HepG2 (cell line): ENCODE measurements at regions of chr3 and their contacts with region 1.

Region 1: GRCh38 chr3:84547971-84548970 is 410.5 kb upstream of the CADM2 start:
- DNase-seq: peak; percentile 36
- ATAC-seq: peak; percentile 97
- H3K4me3 ChIP-seq: peak overlapping the region in 2 of 3 experiments; percentile 15 to 54; a peak in 2 of 6 replicates
- H3K27ac ChIP-seq: no peak overlapping the region
- H3K4me1 ChIP-seq: peaks cover 8% of the 10 kb centered on the region
- H3K27me3 ChIP-seq: no peaks in the 10 kb centered on the region
- CTCF ChIP-seq: peak; percentile 75
- EP300 ChIP-seq: no peak
- POLR2A ChIP-seq: no peak
- RAD21 ChIP-seq: peak; percentile 32; the same call in 1 of the 2 replicates

Region 2: DNA sequence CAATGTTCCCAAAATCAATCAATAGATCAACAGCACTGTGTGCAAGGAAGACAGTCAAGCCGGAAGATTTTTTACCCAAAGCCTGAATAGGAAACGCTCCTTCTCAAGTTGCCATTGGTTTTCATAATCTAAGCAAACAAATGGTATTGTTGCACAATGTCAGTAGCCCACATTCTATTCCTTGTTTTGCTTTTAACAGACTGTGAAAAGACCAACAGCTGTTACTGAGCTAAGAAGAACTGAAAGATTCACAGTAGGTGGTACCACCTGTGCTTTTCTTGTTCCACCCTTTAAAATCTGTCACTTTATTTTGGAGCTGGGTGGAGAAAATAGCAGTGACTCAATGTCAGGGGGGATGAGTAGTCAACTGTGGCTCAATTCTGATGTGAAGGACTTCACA is 53.0 kb after region 1 on chr3:
- CTCF ChIA-PET with region 1: no interaction called
- POLR2A ChIA-PET with region 1: no interaction called
- in situ Hi-C with region 1: no loop called
- intact Hi-C with region 1: no loop called
- DNase-seq: peak; percentile 23
- ATAC-seq: peak; percentile 65
- H3K4me3 ChIP-seq: no peak overlapping the region
- H3K27ac ChIP-seq: no peak overlapping the region
- H3K4me1 ChIP-seq: no peaks in the 10 kb centered on the region
- H3K27me3 ChIP-seq: no peaks in the 10 kb centered on the region
- CTCF ChIP-seq: no peak
- EP300 ChIP-seq: no peak
- POLR2A ChIP-seq: no peak
- RAD21 ChIP-seq: no peak

Region 3: DNA sequence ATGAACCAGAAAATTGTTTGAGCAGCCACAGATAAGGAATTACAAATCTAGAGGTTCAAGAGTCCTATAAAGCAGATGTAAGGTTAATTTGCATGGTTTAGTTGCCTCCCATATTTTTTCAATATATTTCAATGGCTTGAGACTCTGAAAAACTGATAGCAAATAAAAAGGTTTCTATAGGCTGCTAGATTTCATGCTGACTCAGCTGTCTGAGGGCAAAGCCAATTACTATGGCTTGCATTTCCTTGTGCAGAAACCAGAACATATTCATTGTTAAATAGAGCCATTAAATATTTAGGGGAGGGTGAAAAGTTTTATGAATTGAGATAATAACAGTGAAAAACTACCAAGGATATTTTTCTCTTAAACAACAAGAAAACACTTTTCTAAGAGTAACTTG is 132.4 kb after region 1 on chr3:
- CTCF ChIA-PET with region 1: no interaction called
- POLR2A ChIA-PET with region 1: no interaction called
- in situ Hi-C with region 1: no loop called
- intact Hi-C with region 1: no loop called
- DNase-seq: no peak
- ATAC-seq: no peak
- H3K4me3 ChIP-seq: no peak overlapping the region
- H3K27ac ChIP-seq: no peak overlapping the region
- H3K4me1 ChIP-seq: no peaks in the 10 kb centered on the region
- H3K27me3 ChIP-seq: no peaks in the 10 kb centered on the region
- CTCF ChIP-seq: no peak
- EP300 ChIP-seq: no peak
- POLR2A ChIP-seq: no peak
- RAD21 ChIP-seq: no peak

Region 4: GRCh38 chr3:84738086-84738485 is 189.8 kb after region 1 on chr3:
- CTCF ChIA-PET with region 1: no interaction called
- POLR2A ChIA-PET with region 1: no interaction called
- in situ Hi-C with region 1: no loop called
- intact Hi-C with region 1: no loop called
- DNase-seq: no peak
- ATAC-seq: no peak
- H3K4me3 ChIP-seq: no peak overlapping the region
- H3K27ac ChIP-seq: no peak overlapping the region
- H3K4me1 ChIP-seq: no peaks in the 10 kb centered on the region
- H3K27me3 ChIP-seq: no peaks in the 10 kb centered on the region
- CTCF ChIP-seq: no peak
- EP300 ChIP-seq: no peak
- POLR2A ChIP-seq: no peak
- RAD21 ChIP-seq: no peak

Region 5: GRCh38 chr3:84755860-84756259 is 207.6 kb after region 1 on chr3:
- CTCF ChIA-PET with region 1: no interaction called
- POLR2A ChIA-PET with region 1: no interaction called
- in situ Hi-C with region 1: no loop called
- intact Hi-C with region 1: no loop called
- DNase-seq: no peak
- ATAC-seq: no peak
- H3K4me3 ChIP-seq: no peak overlapping the region
- H3K27ac ChIP-seq: no peak overlapping the region
- H3K4me1 ChIP-seq: no peaks in the 10 kb centered on the region
- H3K27me3 ChIP-seq: no peaks in the 10 kb centered on the region
- CTCF ChIP-seq: no peak
- EP300 ChIP-seq: no peak
- POLR2A ChIP-seq: no peak
- RAD21 ChIP-seq: no peak

Region 6: DNA sequence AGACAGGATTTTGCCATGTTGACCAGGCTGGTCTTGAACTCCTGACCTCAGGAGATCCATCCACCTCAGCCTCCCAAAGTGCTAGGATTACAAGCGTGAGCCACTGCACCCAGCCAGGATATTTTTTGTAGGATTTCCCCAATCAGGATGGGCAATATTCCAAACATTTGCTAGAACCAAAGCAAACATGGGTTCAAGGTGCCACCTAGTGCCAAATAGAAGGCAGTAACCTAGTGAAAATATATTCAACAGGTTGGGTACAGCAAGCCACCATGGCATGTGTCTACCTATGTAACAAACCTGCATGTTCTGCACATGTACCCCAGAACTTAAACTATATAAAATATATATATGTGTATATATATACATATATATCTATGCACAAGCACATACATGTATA is 224.6 kb after region 1 on chr3:
- CTCF ChIA-PET with region 1: no interaction called
- POLR2A ChIA-PET with region 1: no interaction called
- in situ Hi-C with region 1: no loop called
- intact Hi-C with region 1: loop called (anchors 5 kb)
- DNase-seq: peak; percentile 3
- ATAC-seq: no peak
- H3K4me3 ChIP-seq: no peak overlapping the region
- H3K27ac ChIP-seq: no peak overlapping the region
- H3K4me1 ChIP-seq: no peaks in the 10 kb centered on the region
- H3K27me3 ChIP-seq: no peaks in the 10 kb centered on the region
- CTCF ChIP-seq: 0 out of 2 replicates have a peak, but pooled peaks have one; percentile 10
- EP300 ChIP-seq: no peak
- POLR2A ChIP-seq: no peak
- RAD21 ChIP-seq: no peak

Region 7: GRCh38 chr3:84965141-84965540 is 416.9 kb after region 1 on chr3:
- CTCF ChIA-PET with region 1: interaction called, 5 read pairs
- POLR2A ChIA-PET with region 1: no interaction called
- in situ Hi-C with region 1: no loop called
- intact Hi-C with region 1: loop called (anchors 1 kb)
- DNase-seq: peak; percentile 10
- ATAC-seq: peak; percentile 97
- H3K4me3 ChIP-seq: no peak overlapping the region
- H3K27ac ChIP-seq: no peak overlapping the region
- H3K4me1 ChIP-seq: no peaks in the 10 kb centered on the region
- H3K27me3 ChIP-seq: peaks cover 0 to 14% of the 10 kb centered on the region in 2 experiments; a peak in 2 of 5 replicates
- CTCF ChIP-seq: peak; percentile 51
- EP300 ChIP-seq: no peak
- POLR2A ChIP-seq: no peak
- RAD21 ChIP-seq: no peak

Region 8: GRCh38 chr3:85342915-85343314 is 794.6 kb after region 1 on chr3:
- CTCF ChIA-PET with region 1: no interaction called
- POLR2A ChIA-PET with region 1: no interaction called
- in situ Hi-C with region 1: no loop called
- intact Hi-C with region 1: loop called (anchors 5 kb)
- DNase-seq: peak; percentile 3
- ATAC-seq: peak; percentile 86
- H3K4me3 ChIP-seq: no peak overlapping the region
- H3K27ac ChIP-seq: no peak overlapping the region
- H3K4me1 ChIP-seq: no peaks in the 10 kb centered on the region
- H3K27me3 ChIP-seq: no peaks in the 10 kb centered on the region
- CTCF ChIP-seq: peak; percentile 66
- EP300 ChIP-seq: no peak
- POLR2A ChIP-seq: no peak
- RAD21 ChIP-seq: no peak